ENCODE measurements at regions of chr12 and their contacts with region 1.

Region 1: DNA sequence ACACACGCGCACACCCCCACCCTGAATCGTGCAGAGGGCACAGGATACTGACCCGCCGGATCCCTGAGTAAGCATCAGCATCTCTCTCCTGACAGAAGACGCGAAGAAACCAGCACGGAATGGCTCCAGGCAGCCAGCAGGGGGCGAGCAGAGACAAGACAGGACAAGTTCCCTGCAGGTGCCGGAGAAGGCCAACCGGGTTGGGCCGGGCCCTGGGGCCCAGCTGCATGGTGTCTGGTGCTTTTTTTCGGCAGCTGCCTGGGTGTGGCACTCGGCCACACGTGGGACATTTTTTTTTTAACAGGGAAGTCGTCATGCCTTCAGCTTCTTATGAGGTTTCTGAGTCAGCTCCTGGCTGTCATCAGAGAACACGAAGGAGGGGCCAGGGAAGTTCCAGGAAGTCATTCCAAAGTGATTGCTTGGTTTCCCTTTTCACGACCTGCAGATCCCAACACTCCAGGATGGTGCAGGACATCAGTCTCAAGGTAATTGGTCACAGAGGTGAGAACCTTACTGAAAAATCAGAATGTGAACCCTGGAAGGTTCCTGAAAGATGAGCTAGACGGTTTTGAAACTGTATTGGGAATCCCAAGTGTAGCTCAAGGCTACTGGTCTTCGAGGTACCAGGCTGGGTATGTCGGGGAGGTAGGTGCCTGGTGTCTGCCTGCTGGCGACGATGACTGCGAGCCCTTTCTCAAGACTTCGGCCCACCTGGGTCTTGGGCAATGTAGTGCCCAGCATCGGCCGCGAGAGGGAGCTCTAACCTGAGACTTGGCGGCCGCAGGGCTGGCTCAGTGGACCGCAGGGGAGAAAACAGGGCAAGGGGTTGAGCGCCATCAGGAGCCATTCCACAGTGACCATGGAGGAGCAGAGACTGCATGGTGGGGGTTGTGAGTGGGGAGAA is 190.8 kb upstream of the PRMT8 start:
- DNase-seq: peak; percentile 92
- ATAC-seq: peak; percentile 59 to 80

Region 2: DNA sequence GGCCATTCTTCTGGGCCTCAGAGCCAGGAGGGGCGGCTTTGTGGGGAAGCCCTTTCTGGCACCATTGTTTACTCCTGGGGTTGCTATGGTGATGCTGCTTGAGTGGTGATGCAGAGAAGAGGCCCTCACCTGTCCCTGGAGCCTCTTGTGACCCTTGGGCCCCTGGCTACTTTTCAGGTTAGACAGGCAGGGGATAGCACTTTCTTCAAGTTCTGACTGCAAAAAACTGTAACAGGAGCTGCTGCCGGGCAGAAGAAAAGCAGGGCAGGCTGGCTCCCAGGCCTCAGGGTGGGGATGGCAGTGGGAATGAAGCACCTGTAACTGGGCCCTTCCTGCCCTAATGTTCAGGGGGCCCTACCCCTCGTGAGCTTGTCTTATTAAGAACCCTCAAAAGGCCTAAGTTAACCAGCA is 443.2 kb before region 1 on chr12 and contains the start of gene TEX52:
- intact Hi-C with region 1: no loop called
- DNase-seq: no peak
- ATAC-seq: no peak
- total RNA-seq, gene TEX52: not detected

Region 3: GRCh38 chr12:3641428-3642018 is 341.3 kb after region 1 on chr12:
- intact Hi-C with region 1: loop called in 1 of 2 experiments (anchors 10 kb)
- DNase-seq: peak; percentile 37
- ATAC-seq: peak in 1 of 2 donors; percentile 54

Region 4: DNA sequence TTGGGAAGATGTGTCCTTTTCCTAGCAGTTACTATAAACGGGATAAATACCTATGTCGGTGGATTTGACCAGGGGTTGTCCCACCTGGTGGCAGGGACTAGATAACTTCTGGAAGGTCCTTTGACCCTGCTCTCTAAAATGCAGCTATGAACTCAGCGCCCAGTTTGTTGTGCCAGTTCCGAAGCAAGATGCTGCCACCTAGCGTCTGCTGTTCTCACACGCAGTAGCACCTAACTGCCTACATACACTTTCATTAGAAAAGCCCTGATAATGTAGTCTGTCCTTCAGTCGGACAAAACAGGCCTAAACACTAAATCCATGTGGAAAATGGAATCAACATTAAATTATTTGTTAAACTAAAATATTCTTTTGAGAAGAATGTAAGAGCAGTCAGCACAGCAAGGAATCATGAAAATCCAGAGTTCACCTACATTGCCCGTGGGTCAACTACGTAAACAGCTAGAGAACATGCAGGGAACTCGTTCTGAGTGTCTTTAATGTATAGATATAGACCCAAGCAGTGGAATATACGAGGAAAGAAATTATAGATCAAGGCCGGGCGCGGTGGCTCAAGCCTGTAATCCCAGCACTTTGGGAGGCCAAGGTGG is 503.8 kb after region 1 on chr12:
- intact Hi-C with region 1: loop called (anchors 2 to 5 kb)
- DNase-seq: peak; percentile 83
- ATAC-seq: peak; percentile 55 to 79

Measured in left cardiac atrium (tissue), 4 donors.